H1 (cell line): ENCODE measurements at regions of chr3 and their contacts with region 1.

Region 1: GRCh38 chr3:184255291-184256039 is 5.9 kb downstream of the CAMK2N2 start:
- DNase-seq: no peak
- H3K4me3 ChIP-seq: no peak overlapping the region
- H3K27ac ChIP-seq: no peak overlapping the region
- H3K4me1 ChIP-seq: peaks cover 0 to 2% (median 1%) of the 10 kb centered on the region in 4 experiments; a peak in 4 of 7 replicates
- H3K27me3 ChIP-seq: peaks cover 2 to 24% (median 20%) of the 10 kb centered on the region in 4 experiments
- CTCF ChIP-seq: no peak
- EP300 ChIP-seq: no peak
- POLR2A ChIP-seq: no peak
- RAD21 ChIP-seq: no peak

Region 2: GRCh38 chr3:183884427-183885296 is 370.8 kb before region 1 on chr3 and contains the start of gene PARL:
- CTCF ChIA-PET with region 1: no interaction called
- POLR2A ChIA-PET with region 1: no interaction called
- DNase-seq: peak; percentile 90 to 99
- H3K4me3 ChIP-seq: peak within 1 kb of the TSS; percentile 74 to 92 (median 88)
- H3K27ac ChIP-seq: peak within 1 kb of the TSS; percentile 81
- H3K4me1 ChIP-seq: peaks cover 0 to 2% (median 0%) of the 10 kb centered on the region in 4 experiments; a peak in 1 of 7 replicates
- H3K27me3 ChIP-seq: peaks cover 0 to 2% (median 0%) of the 10 kb centered on the region in 4 experiments; a peak in 1 of 7 replicates
- CTCF ChIP-seq: peak; percentile 88 to 98 (median 92)
- EP300 ChIP-seq: peak in 1 of 2 experiments; percentile 92; a peak in 1 of 3 replicates
- POLR2A ChIP-seq: peak; percentile 66 to 97
- RAD21 ChIP-seq: peak; percentile 74 to 75
- total RNA-seq, gene PARL: 81.3 and 85.0 TPM in 2 replicates

Region 3: DNA sequence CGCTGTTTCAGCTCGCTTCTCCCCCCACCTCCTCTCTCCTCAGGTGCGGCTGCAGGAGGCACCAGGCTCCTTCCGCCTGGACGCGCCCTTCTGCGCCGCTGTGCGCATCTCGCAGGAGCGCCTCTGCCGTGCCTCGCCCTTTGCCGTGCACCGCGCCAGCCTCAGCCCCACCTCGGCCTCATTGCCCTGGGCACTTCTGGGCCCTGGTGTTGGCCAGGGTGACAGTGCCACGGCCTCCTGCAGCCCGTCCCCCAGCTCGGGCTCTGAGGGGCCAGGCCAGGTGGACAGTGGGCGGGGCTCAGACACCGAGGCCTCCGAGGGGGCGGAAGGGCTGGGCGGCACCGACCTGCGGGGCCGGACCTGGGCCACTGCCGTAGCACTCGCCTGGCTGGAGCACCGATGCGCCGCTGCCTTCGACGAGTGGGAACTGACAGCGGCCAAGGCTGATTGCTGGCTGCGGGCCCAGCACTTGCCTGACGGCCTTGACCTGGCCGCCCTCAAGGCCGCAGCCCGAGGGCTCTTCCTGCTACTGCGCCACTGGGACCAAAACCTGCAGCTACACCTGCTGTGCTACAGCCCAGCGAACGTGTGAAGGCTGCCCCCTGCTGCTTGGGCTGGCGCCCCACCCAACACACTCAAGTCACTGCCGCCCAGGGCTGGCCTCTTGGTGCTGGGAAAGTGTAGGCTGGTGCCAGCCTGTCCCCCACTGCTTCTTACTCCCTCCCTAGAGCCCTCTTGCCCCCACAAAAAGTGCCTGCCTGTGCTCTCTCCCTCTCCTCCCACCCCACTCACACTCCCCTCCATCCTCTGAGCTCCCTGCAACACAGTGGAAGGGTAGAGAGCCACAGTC is 13.8 kb before region 1 on chr3:
- CTCF ChIA-PET with region 1: interaction called, 13 read pairs
- POLR2A ChIA-PET with region 1: interaction called, 13 read pairs
- DNase-seq: peak in 1 of 2 experiments; percentile 57
- H3K4me3 ChIP-seq: peak overlapping the region in 3 of 4 experiments; percentile 26 to 54 (median 42); a peak in 6 of 8 replicates
- H3K27ac ChIP-seq: no peak overlapping the region
- H3K4me1 ChIP-seq: peaks cover 0 to 5% (median 1%) of the 10 kb centered on the region in 4 experiments; a peak in 3 of 7 replicates
- H3K27me3 ChIP-seq: no peaks in the 10 kb centered on the region; a peak in 2 of 7 replicates
- CTCF ChIP-seq: peak in 2 of 3 experiments; percentile 41 to 56; a peak in 3 of 4 replicates
- EP300 ChIP-seq: no peak
- POLR2A ChIP-seq: no peak
- RAD21 ChIP-seq: peak; percentile 45 to 65

Region 4: DNA sequence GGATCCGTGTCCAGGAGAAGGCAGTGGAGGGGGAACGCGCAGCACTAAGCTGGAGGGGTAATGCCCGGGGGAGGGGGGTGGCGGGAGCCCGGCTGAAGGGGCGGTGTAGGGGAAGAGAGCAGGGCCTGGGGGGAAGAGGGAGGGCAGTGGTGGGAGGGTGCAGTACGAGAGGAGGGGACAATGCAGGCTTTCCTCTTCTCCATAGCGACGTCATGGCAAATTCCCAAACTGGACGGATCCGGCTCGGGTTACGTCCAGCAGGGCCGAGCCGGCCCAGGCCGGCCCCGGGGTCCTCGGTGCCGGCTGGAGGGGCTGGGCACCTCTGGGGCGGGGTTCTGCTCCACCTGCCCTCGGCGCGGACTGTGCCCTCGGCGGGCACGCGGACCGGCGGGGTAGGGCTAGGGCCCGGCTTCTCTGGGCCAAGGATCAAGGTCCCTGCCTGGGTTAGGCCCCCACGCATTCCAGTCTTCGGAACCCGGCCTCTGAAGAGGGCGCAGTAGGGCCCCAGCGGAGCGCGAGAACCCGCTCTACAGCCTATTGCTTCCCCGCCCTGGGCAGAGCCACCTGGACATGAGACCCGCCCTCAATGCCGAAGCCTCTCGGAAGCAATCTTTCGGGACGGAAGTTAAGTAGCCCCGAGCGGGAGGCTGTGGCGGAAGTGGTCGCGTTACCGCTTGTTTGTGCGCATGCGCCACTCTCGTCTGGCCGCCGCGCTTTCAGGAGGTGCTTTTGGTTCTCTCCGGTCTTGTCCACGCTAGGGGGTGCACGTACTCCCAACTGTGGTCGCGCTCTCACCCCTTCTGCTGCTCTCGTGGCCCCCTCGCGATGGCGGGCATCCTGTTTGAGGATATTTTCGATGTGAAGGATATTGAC is 107.4 kb after region 1 on chr3:
- CTCF ChIA-PET with region 1: no interaction called
- POLR2A ChIA-PET with region 1: no interaction called
- DNase-seq: peak; percentile 93 to 95
- H3K4me3 ChIP-seq: peak overlapping the region; percentile 77 to 88 (median 80)
- H3K27ac ChIP-seq: peak overlapping the region; percentile 92
- H3K4me1 ChIP-seq: peaks cover 3 to 18% (median 12%) of the 10 kb centered on the region in 4 experiments
- H3K27me3 ChIP-seq: peaks cover 0 to 8% (median 3%) of the 10 kb centered on the region in 4 experiments; a peak in 3 of 7 replicates
- CTCF ChIP-seq: peak in 2 of 3 experiments; percentile 57 to 65; a peak in 3 of 4 replicates
- EP300 ChIP-seq: no peak; a peak in 1 of 3 replicates
- POLR2A ChIP-seq: peak in 1 of 2 experiments; percentile 86; a peak in 2 of 3 replicates
- RAD21 ChIP-seq: peak; percentile 11 to 30; a peak in 2 of 4 replicates